Left lung (tissue), 14 donors: ENCODE measurements at regions of chr14 and their contacts with region 1.

Region 1: DNA sequence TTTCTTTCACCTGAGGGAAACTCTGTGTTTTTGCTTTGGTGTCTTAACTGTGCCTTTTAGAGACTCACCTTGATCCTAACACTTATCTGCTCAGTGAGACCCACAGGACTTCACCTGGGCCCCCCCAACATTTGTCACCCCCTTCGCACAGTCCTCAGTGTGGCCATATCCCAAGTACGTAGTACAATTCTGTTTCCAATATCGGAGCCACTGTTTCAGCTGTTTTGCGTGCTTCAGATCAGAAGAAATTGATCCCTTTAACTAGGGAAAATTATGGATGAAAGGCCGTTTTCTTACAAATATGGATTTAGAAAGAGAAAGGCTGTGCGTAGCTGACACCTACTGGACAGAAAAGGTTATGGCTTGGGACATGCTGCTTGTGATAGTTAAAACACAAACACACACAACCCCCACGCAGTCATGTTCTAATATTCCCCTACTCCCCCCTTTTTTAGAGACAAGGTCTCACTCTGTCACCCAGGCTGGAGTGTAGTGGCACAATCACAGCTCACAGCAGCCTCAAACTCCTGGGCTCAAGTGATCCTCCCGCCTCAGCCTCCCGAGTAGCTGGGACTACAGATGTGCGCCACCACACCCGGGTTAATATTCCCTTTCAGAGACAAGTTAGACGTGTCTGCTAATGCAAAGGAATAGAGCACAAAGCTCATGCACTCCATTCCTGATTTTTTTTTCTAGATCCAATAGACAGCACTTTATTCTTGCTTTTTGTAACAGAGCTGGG is 3.6 kb upstream of the SLC7A8 start:
- DNase-seq: peak in 2 of 4 donors; percentile 58 to 78
- ATAC-seq: peak; percentile 69
- H3K4me3 ChIP-seq: no peak overlapping the region
- H3K27ac ChIP-seq: no peak overlapping the region
- H3K4me1 ChIP-seq: peaks cover 0 to 14% of the 10 kb centered on the region in 2 donors
- H3K27me3 ChIP-seq: peaks cover 0 to 8% of the 10 kb centered on the region in 2 donors
- CTCF ChIP-seq: peak; percentile 58 to 74

Region 2: GRCh38 chr14:23006544-23007419 is 180.3 kb before region 1 on chr14:
- intact Hi-C with region 1: no loop called
- DNase-seq: peak; percentile 96 to 99 (median 97)
- ATAC-seq: peak; percentile 98
- H3K4me3 ChIP-seq: peak overlapping the region; percentile 57 to 69
- H3K27ac ChIP-seq: peak overlapping the region; percentile 95 to 97
- H3K4me1 ChIP-seq: peaks cover 8 to 30% of the 10 kb centered on the region in 2 donors
- H3K27me3 ChIP-seq: no peaks in the 10 kb centered on the region
- CTCF ChIP-seq: no peak

Region 3: GRCh38 chr14:23120541-23121251 is 66.4 kb before region 1 on chr14:
- intact Hi-C with region 1: loop called (anchors 5 to 10 kb)
- DNase-seq: peak; percentile 84 to 96 (median 92)
- ATAC-seq: peak; percentile 96
- H3K4me3 ChIP-seq: no peak overlapping the region
- H3K27ac ChIP-seq: peak overlapping the region in 1 of 2 donors; percentile 89
- H3K4me1 ChIP-seq: peaks cover 11 to 47% of the 10 kb centered on the region in 2 donors
- H3K27me3 ChIP-seq: no peaks in the 10 kb centered on the region
- CTCF ChIP-seq: peak; percentile 99